ENCODE measurements at regions of chr5 and their contacts with region 1.

Region 1: DNA sequence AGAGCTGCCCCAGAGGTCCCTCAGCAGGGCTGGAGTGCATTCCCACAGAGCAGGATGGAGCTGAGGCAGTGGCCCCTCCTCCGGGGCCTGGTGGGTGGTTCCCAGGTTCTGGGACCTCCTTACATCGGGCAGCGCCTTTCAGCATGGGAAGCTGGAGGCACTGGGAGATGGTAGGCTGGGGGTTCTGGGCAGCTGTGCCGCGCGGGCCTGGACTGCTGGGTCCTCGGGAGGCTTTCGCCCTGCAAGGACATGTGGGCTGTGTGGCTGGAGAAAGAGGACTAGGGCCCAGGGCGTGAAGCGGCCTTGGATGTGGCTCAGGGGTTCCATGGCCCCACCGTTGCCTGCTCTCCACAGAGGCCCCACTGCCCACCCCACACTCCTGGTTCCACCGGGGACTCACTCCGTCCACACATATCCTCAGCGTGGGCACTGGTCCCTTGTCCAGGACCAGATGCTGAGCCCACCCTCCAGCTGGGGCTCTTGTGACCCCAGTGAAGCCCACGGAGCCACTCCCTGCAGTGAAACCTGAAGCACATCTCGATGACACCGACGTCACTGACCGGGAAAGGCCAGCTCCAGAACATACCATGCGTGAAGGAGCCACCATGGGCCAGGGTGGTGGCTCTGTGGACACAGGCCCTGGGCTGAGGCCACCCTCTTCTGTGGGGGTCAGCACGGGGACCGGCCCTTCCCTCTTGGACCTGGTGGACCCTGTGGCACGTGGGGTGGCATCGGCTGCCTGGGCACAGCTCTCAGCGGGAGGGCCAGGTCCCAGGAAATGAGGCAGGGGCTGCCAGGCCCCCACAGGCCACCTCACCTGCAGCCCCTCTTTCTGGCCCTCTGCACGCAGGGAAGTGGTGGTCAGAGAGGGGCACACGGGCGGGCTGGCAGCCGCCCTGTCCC is 31.5 kb upstream of the NKD2 start:
- DNase-seq: no peak
- H3K4me3 ChIP-seq: no peak overlapping the region
- H3K27ac ChIP-seq: no peak overlapping the region
- H3K27me3 ChIP-seq: peaks cover 15% of the 10 kb centered on the region
- CTCF ChIP-seq: no peak

Region 2: GRCh38 chr5:1568201-1568979 is 591.3 kb after region 1 on chr5:
- CTCF ChIA-PET with region 1: no interaction called
- POLR2A ChIA-PET with region 1: interaction called, 14 read pairs
- DNase-seq: peak; percentile 57
- H3K4me3 ChIP-seq: no peak overlapping the region
- H3K27ac ChIP-seq: peak overlapping the region; percentile 61
- H3K27me3 ChIP-seq: peaks cover 3% of the 10 kb centered on the region
- CTCF ChIP-seq: no peak